Endothelial cell of umbilical vein (primary cell): ENCODE measurements at regions of chr4 and their contacts with region 1.

Region 1: DNA sequence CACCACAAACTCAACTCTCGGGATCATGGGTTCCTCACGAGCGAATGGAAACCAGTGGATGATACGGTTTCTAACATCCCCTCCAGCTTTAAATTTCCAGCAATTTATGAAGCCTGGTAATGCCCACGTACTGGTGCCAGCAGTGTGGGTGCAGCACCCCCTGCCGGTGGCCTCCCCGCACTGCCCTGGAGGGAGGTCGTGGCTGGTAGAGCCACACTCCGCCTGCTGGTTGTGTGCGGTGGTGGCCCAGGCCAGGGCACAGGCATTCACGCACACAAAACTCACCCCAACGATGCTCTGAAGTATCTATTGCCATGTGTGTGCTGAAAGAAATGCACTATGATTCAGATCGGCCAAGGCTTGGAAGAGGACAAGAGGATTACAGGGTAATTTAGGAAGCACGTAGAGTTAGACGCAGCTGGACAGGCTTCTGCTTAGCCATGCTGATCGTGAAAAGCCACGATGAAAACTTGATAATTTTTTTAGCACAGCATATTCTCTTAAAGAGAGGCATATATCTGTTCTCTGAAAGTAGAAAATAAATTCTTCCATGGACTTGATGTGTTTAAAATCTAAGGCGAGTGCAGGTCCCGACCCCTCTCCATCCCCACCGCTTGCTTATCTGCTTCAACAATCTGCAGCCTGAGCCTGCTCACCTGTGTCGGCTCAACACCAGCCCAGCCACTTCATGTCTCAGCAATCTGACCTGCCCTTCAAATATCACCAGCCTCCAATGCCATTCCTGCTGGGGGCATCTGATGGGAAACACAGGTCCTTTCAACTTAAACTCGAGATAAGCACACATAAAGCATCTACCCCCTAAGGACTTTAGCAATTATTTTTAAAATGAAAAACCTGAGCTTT is 59.0 kb downstream of the SCD5 start:
- DNase-seq: peak; percentile 82
- H3K4me3 ChIP-seq: no peak overlapping the region
- H3K27ac ChIP-seq: no peak overlapping the region
- H3K4me1 ChIP-seq: no peaks in the 10 kb centered on the region
- H3K27me3 ChIP-seq: no peaks in the 10 kb centered on the region
- CTCF ChIP-seq: peak; percentile 99 to 100
- POLR2A ChIP-seq: no peak

Region 2: GRCh38 chr4:82484996-82485783 is 254.4 kb before region 1 on chr4:
- CTCF ChIA-PET with region 1: interaction called, 29 read pairs
- POLR2A ChIA-PET with region 1: no interaction called
- dilution Hi-C with region 1: no loop called
- intact Hi-C with region 1: no loop called
- DNase-seq: no peak
- H3K4me3 ChIP-seq: no peak overlapping the region
- H3K27ac ChIP-seq: no peak overlapping the region
- H3K4me1 ChIP-seq: no peaks in the 10 kb centered on the region
- H3K27me3 ChIP-seq: no peaks in the 10 kb centered on the region
- CTCF ChIP-seq: no peak
- POLR2A ChIP-seq: no peak

Region 3: GRCh38 chr4:82578935-82579334 is 160.6 kb before region 1 on chr4:
- CTCF ChIA-PET with region 1: interaction called, 10 read pairs
- POLR2A ChIA-PET with region 1: no interaction called
- dilution Hi-C with region 1: no loop called
- intact Hi-C with region 1: no loop called
- DNase-seq: peak; percentile 14
- H3K4me3 ChIP-seq: no peak overlapping the region
- H3K27ac ChIP-seq: no peak overlapping the region
- H3K4me1 ChIP-seq: no peaks in the 10 kb centered on the region
- H3K27me3 ChIP-seq: peaks cover 0 to 1% of the 10 kb centered on the region in 2 experiments
- CTCF ChIP-seq: peak; percentile 9 to 36
- POLR2A ChIP-seq: no peak

Region 4: DNA sequence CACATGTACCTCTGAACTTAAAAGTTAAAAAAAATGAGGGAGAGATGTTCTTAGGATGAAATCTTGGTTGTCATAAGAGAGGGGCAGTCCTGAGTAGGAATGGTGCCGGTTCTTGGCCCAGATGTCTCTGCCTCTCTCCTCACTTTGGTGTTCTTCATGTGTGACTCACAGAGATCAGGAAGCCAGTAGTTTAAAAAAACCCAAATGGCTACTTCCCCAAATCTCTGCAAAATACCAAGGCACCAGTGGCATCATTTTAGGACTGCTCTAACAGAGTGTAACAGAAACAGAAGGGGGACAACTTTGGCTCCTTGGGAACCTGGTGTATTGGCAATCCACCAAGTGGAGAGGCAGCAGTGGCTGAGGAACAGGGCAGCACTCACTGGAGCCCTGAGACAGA is 57.8 kb before region 1 on chr4:
- CTCF ChIA-PET with region 1: interaction called, 10 read pairs
- POLR2A ChIA-PET with region 1: no interaction called
- dilution Hi-C with region 1: no loop called
- intact Hi-C with region 1: no loop called
- DNase-seq: no peak
- H3K4me3 ChIP-seq: no peak overlapping the region
- H3K27ac ChIP-seq: no peak overlapping the region
- H3K4me1 ChIP-seq: peaks cover 2% of the 10 kb centered on the region
- H3K27me3 ChIP-seq: no peaks in the 10 kb centered on the region
- CTCF ChIP-seq: no peak
- POLR2A ChIP-seq: no peak

Region 5: DNA sequence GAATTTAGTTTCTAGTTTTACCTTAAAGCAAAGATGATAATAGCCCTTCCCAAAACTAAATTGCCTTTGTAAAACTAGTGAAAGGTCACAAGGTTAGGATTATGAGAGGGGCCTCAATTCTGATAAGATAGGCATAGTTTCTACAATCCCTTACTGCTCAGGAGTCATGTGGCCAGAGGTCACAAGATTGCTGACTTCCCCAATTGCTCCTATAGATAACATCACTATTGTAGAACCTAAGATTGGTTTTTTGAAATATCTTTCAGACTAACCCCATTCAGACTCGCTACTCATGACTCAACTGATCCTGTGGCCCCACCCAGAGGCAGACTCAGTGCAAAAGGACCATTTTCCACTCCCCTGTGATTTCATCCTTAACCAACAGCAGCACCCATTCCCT is 11.2 kb before region 1 on chr4:
- CTCF ChIA-PET with region 1: interaction called, 41 read pairs
- POLR2A ChIA-PET with region 1: no interaction called
- dilution Hi-C with region 1: no loop called
- intact Hi-C with region 1: no loop called
- DNase-seq: no peak
- H3K4me3 ChIP-seq: no peak overlapping the region
- H3K27ac ChIP-seq: no peak overlapping the region
- H3K4me1 ChIP-seq: no peaks in the 10 kb centered on the region
- H3K27me3 ChIP-seq: no peaks in the 10 kb centered on the region
- CTCF ChIP-seq: no peak
- POLR2A ChIP-seq: no peak

Region 6: GRCh38 chr4:82811838-82812341 is 72.3 kb after region 1 on chr4:
- CTCF ChIA-PET with region 1: interaction called, 13 read pairs
- POLR2A ChIA-PET with region 1: no interaction called
- dilution Hi-C with region 1: no loop called
- intact Hi-C with region 1: no loop called
- DNase-seq: peak; percentile 28
- H3K4me3 ChIP-seq: no peak overlapping the region
- H3K27ac ChIP-seq: no peak overlapping the region
- H3K4me1 ChIP-seq: peaks cover 6% of the 10 kb centered on the region
- H3K27me3 ChIP-seq: no peaks in the 10 kb centered on the region
- CTCF ChIP-seq: no peak
- POLR2A ChIP-seq: no peak

Region 7: DNA sequence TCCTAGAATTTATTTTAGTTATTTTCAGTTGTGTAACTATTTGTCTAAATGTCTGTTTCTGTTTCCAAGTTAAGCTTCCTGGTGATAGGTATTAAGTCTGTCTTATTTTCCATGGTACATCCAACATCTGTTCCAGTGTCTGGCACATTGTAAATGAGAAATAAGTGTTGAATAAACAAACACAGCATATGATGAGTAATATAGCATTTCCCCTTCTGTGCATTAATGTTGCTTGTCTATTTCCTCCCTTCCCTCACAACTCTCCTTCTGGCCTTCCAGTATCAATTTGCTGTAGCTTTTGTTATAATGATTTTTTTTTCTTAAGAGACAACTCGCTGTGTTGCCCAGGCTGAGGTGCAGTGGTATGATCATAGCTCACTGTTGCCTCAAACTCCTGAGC is 331.6 kb after region 1 on chr4:
- CTCF ChIA-PET with region 1: no interaction called
- POLR2A ChIA-PET with region 1: no interaction called
- dilution Hi-C with region 1: no loop called
- intact Hi-C with region 1: no loop called
- DNase-seq: peak; percentile 75
- H3K4me3 ChIP-seq: no peak overlapping the region
- H3K27ac ChIP-seq: peak overlapping the region; percentile 70
- H3K4me1 ChIP-seq: peaks cover 28% of the 10 kb centered on the region
- H3K27me3 ChIP-seq: no peaks in the 10 kb centered on the region
- CTCF ChIP-seq: no peak
- POLR2A ChIP-seq: no peak